Caco-2 (cell line): ENCODE measurements at regions of chr7 and their contacts with region 1.

Region 1: DNA sequence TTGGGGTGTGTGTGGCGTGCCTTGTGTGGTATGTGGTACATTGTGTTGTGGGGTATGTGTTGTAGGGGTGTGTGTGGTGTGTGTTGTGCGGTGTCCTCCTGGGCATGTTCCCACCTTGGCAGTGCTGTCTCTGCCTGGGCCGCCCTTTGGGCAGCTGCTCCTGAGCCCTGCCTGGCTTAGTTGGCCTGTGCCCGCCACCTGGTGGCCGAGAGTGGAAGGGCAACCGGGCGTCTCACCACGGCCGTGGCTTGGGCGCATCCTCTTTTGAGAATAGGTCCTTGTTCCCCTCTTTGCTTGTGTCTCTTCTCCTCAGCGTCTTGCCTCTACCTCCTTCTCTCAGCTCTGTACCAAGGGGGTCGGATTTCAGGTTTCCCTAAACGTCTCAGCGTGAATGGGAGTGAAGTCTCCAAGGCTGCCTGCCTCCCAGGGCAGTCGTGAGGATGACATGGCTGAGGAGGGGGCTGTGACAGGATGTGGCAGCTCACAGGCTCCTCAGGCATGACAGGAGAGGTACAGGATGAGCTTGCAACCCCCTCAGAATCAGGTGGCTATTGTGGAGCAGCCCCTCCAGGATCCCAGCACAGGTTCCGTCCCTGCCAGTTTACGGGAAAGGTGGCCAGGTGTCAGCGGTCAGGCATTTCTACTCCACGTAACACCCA is 98.4 kb upstream of the PODXL start:
- DNase-seq: peak; percentile 95
- H3K4me3 ChIP-seq: no peak overlapping the region
- H3K4me3 Mint-ChIP-seq: peak overlapping the region; percentile 86
- H3K27ac Mint-ChIP-seq: peak overlapping the region; percentile 77
- H3K4me1 ChIP-seq: peaks cover 41% of the 10 kb centered on the region
- H3K4me1 Mint-ChIP-seq: peaks cover 13% of the 10 kb centered on the region
- H3K27me3 ChIP-seq: no peaks in the 10 kb centered on the region
- H3K27me3 Mint-ChIP-seq: no peaks in the 10 kb centered on the region
- CTCF ChIP-seq: peak; percentile 96 to 97

Region 2: GRCh38 chr7:131513245-131514061 is 141.3 kb before region 1 on chr7:
- CTCF ChIA-PET with region 1: interaction called, 6 read pairs
- POLR2A ChIA-PET with region 1: interaction called, 5 read pairs
- intact Hi-C with region 1: loop called (anchors 1 kb)
- DNase-seq: peak; percentile 85 to 88
- H3K4me3 ChIP-seq: no peak overlapping the region
- H3K4me3 Mint-ChIP-seq: no peak overlapping the region
- H3K27ac Mint-ChIP-seq: peak overlapping the region; percentile 4
- H3K4me1 ChIP-seq: peaks cover 19% of the 10 kb centered on the region
- H3K4me1 Mint-ChIP-seq: peaks cover 45% of the 10 kb centered on the region
- H3K27me3 ChIP-seq: no peaks in the 10 kb centered on the region
- H3K27me3 Mint-ChIP-seq: no peaks in the 10 kb centered on the region
- CTCF ChIP-seq: peak; percentile 93 to 95

Region 3: GRCh38 chr7:131581241-131582051 is 73.4 kb before region 1 on chr7:
- CTCF ChIA-PET with region 1: interaction called, 17 read pairs
- POLR2A ChIA-PET with region 1: interaction called, 24 read pairs
- intact Hi-C with region 1: loop called (anchors 1 kb)
- DNase-seq: no peak
- H3K4me3 ChIP-seq: no peak overlapping the region
- H3K4me3 Mint-ChIP-seq: no peak overlapping the region
- H3K27ac Mint-ChIP-seq: no peak overlapping the region
- H3K4me1 ChIP-seq: peaks cover 24% of the 10 kb centered on the region
- H3K4me1 Mint-ChIP-seq: peaks cover 11% of the 10 kb centered on the region
- H3K27me3 ChIP-seq: no peaks in the 10 kb centered on the region
- H3K27me3 Mint-ChIP-seq: no peaks in the 10 kb centered on the region
- CTCF ChIP-seq: no peak

Region 4: GRCh38 chr7:131619336-131620305 is 35.2 kb before region 1 on chr7:
- CTCF ChIA-PET with region 1: interaction called, 7 read pairs
- POLR2A ChIA-PET with region 1: interaction called, 18 read pairs
- intact Hi-C with region 1: loop called (anchors 1 kb)
- DNase-seq: peak; percentile 90 to 96
- H3K4me3 ChIP-seq: no peak overlapping the region
- H3K4me3 Mint-ChIP-seq: peak overlapping the region; percentile 22
- H3K27ac Mint-ChIP-seq: peak overlapping the region; percentile 13
- H3K4me1 ChIP-seq: peaks cover 76% of the 10 kb centered on the region
- H3K4me1 Mint-ChIP-seq: peaks cover 50% of the 10 kb centered on the region
- H3K27me3 ChIP-seq: no peaks in the 10 kb centered on the region
- H3K27me3 Mint-ChIP-seq: no peaks in the 10 kb centered on the region
- CTCF ChIP-seq: no peak

Region 5: DNA sequence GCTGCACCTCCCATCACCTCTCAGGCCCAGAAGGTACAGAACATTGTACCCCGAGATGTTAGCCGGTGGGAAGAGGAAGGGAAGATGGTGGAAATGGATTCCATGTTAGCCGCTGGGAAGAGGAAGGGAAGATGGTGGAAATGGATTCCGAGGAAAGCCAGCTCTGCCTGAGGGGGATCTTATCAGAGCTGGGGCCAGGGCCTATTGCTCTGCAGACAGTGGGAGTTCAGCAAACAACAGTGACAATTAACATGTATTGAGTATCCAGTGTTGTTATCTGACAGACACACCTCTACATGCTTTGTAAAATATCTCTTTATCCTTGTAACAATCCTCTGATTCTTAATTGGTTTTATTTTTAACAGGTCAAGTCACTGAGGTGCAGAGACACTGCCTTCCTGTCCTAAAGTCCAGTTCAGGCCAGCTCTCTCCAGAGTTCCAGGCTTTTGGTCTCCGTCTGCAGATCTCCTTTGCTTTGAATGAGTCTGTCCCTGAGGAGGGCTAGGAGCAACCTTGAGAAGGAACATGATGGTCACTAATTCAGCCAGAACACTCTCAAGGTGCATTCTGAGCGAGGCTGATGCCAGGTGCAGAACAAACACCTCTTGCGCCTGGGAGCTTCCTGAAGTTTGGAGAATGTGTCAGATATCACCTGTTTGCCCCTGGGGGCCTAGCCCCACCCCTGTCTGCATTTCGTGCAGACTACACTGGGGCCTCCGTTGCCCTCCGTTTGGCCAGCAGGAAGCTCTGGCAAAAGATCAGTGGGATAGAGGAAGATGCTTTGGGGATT is 16.0 kb before region 1 on chr7:
- CTCF ChIA-PET with region 1: interaction called, 7 read pairs
- POLR2A ChIA-PET with region 1: interaction called, 16 read pairs
- intact Hi-C with region 1: loop called (anchors 1 kb)
- DNase-seq: peak; percentile 75 to 84
- H3K4me3 ChIP-seq: no peak overlapping the region
- H3K4me3 Mint-ChIP-seq: peak overlapping the region; percentile 17
- H3K27ac Mint-ChIP-seq: peak overlapping the region; percentile 73
- H3K4me1 ChIP-seq: peaks cover 72% of the 10 kb centered on the region
- H3K4me1 Mint-ChIP-seq: peaks cover 64% of the 10 kb centered on the region
- H3K27me3 ChIP-seq: no peaks in the 10 kb centered on the region
- H3K27me3 Mint-ChIP-seq: no peaks in the 10 kb centered on the region
- CTCF ChIP-seq: no peak